ENCODE measurements at regions of chr14 and their contacts with region 1.

Region 1: GRCh38 chr14:100375963-100376735 is 53.0 kb downstream of the SLC25A47 start:
- DNase-seq: peak; percentile 92 to 96
- H3K4me3 ChIP-seq: peak within 1 kb of the TSS; percentile 90
- H3K4me3 Mint-ChIP-seq: peak within 1 kb of the TSS; percentile 83
- H3K27ac Mint-ChIP-seq: peak within 1 kb of the TSS; percentile 77
- H3K4me1 ChIP-seq: no peaks in the 10 kb centered on the region
- H3K4me1 Mint-ChIP-seq: peaks cover 22% of the 10 kb centered on the region
- H3K27me3 ChIP-seq: no peaks in the 10 kb centered on the region
- H3K27me3 Mint-ChIP-seq: no peaks in the 10 kb centered on the region
- CTCF ChIP-seq: no peak

Region 2: DNA sequence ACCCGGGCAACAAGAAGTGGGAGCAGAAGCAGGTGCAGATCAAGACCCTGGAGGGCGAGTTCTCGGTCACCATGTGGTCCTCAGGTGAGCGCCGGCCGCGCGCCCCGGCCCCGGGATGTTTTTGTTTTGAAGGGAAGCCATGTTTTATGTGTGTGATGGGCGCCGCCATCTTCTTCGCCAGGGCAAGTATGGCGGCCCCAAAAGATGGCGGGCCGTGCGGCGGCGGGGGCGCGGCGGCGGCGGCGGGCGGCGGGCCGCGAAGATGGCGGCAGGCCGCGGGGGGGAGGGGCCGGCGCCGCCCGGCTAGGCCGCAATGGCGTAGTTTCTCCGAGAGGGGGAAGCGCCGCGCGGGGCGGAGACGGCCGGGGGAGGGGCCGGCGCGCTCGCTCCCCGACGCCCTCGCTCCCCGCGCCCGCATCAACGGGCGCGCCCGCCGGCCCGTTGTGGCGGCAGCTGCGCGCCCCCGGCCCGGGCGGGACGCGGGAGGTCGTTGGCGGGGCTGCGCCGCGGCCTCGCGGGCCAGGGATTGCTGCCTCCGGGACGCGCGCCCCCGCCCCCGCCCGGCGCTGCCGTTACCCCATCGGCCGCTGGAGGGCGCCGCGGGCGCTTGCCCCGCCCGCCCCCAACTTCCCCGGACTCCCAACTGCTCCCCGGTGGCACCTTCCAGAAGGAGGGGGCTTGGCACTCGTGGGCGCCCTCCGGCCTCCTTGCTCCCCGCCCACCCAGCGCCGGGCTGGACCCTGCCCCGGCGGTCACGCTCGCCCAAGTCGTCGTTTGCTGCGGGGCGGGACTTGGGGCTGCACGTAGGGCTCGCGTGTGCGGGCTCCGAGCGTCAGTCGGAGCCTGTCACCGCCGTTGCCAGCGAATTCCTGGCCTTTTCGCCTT is 136.1 kb before region 1 on chr14:
- CTCF ChIA-PET with region 1: no interaction called
- POLR2A ChIA-PET with region 1: no interaction called
- intact Hi-C with region 1: loop called (anchors 2 kb)
- DNase-seq: peak; percentile 90 to 91
- H3K4me3 ChIP-seq: peak overlapping the region; percentile 100
- H3K4me3 Mint-ChIP-seq: peak overlapping the region; percentile 84
- H3K27ac Mint-ChIP-seq: peak overlapping the region; percentile 91
- H3K4me1 ChIP-seq: peaks cover 7% of the 10 kb centered on the region; the same call in 1 of the 2 replicates
- H3K4me1 Mint-ChIP-seq: peaks cover 9% of the 10 kb centered on the region
- H3K27me3 ChIP-seq: no peaks in the 10 kb centered on the region
- H3K27me3 Mint-ChIP-seq: no peaks in the 10 kb centered on the region
- CTCF ChIP-seq: peak; percentile 55 to 68

Region 3: GRCh38 chr14:100271247-100271939 is 104.8 kb before region 1 on chr14:
- CTCF ChIA-PET with region 1: interaction called, 3 read pairs
- POLR2A ChIA-PET with region 1: no interaction called
- intact Hi-C with region 1: loop called (anchors 1 kb)
- DNase-seq: peak in 1 of 2 experiments; percentile 75
- H3K4me3 ChIP-seq: no peak overlapping the region
- H3K4me3 Mint-ChIP-seq: no peak overlapping the region
- H3K27ac Mint-ChIP-seq: peak overlapping the region; percentile 53
- H3K4me1 ChIP-seq: peaks cover 7% of the 10 kb centered on the region
- H3K4me1 Mint-ChIP-seq: peaks cover 17% of the 10 kb centered on the region
- H3K27me3 ChIP-seq: no peaks in the 10 kb centered on the region
- H3K27me3 Mint-ChIP-seq: no peaks in the 10 kb centered on the region
- CTCF ChIP-seq: peak; percentile 36 to 50

Region 4: DNA sequence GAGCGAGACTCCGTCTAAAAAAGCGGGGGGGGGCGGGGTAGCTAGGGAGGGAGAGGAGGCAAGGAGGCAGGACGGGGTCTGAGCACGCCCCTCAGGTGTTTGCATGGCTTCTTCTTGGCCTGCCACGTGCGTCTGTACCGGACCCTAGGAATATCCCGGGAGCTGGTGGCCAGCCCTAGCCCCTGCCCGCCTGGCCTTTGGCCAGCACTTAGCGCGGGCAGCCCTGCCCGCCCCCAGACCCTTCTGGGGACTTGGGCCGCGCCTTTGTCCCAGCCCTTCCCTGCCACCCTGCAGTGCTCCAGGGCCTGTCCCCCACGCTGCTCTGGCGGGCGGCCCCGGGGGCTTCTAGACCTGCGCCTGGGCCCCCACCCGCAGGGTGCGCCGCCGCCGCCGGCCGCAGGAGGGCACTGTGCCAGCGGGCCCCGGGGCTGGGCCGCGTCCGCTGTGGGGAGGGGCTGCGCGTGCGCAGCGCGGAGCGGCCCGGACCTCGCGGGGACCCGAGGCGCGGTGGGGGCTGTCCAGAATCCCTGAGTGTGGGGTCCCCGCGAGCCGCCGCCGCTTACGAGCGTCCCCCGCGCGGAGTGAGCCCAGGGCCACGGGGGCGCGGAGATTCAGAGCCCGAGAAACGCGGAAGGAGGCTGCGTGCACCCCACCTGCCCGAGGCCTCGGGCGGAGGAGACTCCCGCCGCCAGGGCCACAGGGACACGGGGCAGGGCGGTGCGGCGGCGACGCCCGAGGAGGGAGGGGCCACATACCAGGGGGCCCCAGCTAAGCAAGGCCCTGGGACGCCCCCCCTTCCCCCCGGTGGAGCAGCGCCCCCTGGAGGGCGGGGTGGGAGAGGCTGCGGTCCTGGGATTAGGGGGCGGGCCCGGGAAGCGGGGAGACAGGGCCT is 90.9 kb before region 1 on chr14:
- CTCF ChIA-PET with region 1: interaction called, 6 read pairs
- POLR2A ChIA-PET with region 1: no interaction called
- intact Hi-C with region 1: loop called (anchors 1 kb)
- DNase-seq: peak; percentile 72 to 88
- H3K4me3 ChIP-seq: peak overlapping the region; percentile 84
- H3K4me3 Mint-ChIP-seq: peak overlapping the region; percentile 72
- H3K27ac Mint-ChIP-seq: peak overlapping the region; percentile 68
- H3K4me1 ChIP-seq: 0 out of 2 replicates have a peak, but pooled peaks cover 5% of the 10 kb centered on the region
- H3K4me1 Mint-ChIP-seq: peaks cover 6% of the 10 kb centered on the region
- H3K27me3 ChIP-seq: no peaks in the 10 kb centered on the region
- H3K27me3 Mint-ChIP-seq: no peaks in the 10 kb centered on the region
- CTCF ChIP-seq: peak; percentile 65 to 89

Region 5: DNA sequence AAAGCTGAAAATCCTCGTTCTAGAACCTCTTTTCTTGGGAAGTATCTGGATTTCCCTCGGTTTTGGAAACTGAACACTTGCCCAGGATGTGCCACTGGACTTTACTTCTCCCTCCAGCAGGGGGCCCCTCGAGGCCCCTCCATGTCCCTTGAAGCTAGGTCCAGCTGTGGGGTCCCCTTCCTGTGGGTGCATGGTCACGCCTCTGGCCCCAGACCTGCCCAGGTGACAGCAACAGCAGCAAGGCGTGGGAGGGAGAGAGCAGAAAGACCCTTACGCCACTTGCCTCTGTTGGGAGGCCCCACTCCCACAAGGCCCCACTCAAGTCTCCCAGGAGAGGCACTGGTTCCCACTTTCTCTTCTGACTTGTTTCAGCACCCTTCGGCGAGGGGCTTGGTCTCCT is 73.0 kb before region 1 on chr14:
- CTCF ChIA-PET with region 1: interaction called, 10 read pairs
- POLR2A ChIA-PET with region 1: no interaction called
- intact Hi-C with region 1: loop called (anchors 1 kb)
- DNase-seq: no peak
- H3K4me3 ChIP-seq: no peak overlapping the region
- H3K4me3 Mint-ChIP-seq: no peak overlapping the region
- H3K27ac Mint-ChIP-seq: no peak overlapping the region
- H3K4me1 ChIP-seq: peaks cover 14% of the 10 kb centered on the region; the same call in 1 of the 2 replicates
- H3K4me1 Mint-ChIP-seq: peaks cover 15% of the 10 kb centered on the region
- H3K27me3 ChIP-seq: no peaks in the 10 kb centered on the region
- H3K27me3 Mint-ChIP-seq: no peaks in the 10 kb centered on the region
- CTCF ChIP-seq: peak; percentile 48 to 59

Region 6: DNA sequence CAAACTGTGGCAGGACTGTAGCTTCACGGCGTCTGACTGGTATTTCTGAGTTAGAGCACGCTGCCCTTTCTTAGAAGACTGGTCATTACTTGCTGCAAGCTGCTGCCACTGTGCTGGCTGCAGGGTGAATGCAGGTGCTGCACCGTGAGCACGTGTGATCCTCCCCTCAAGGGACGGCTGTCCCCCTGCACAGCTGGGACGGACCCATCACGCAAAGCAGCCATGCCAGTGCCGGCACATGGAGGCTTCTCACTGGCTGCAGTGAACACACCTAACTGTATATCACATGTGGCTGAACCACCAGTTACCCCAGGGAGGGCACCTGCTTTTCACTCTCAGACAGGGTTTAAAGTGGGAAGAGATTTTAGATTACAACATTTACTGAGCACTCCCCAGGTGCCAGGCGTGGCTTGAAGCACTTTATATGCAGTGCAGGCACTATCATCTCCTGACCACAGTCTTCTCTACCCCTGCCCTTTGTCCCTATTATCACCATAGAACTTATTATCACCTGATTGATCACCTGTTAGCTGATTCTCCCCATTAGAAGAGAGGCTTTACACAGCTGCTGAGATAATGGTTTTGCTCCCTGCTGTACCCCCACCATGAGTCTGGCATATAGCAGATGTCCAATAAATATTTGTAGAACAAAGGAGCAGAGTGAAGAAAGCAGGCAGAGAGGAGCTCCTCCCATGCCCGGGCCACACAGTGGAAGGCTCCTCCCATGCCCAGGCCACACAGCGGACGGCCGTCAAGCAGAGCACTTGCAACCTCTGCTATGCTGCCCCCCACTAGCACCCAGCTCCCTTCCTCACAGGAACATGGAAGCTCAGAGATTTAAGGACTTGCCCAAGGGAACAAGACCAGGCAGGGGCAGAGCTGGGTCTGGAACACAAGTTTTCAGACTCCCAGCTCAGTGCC is 27.1 kb before region 1 on chr14:
- CTCF ChIA-PET with region 1: no interaction called
- POLR2A ChIA-PET with region 1: no interaction called
- intact Hi-C with region 1: no loop called
- DNase-seq: no peak
- H3K4me3 ChIP-seq: no peak overlapping the region
- H3K4me3 Mint-ChIP-seq: no peak overlapping the region
- H3K27ac Mint-ChIP-seq: no peak overlapping the region
- H3K4me1 ChIP-seq: no peaks in the 10 kb centered on the region
- H3K4me1 Mint-ChIP-seq: no peaks in the 10 kb centered on the region
- H3K27me3 ChIP-seq: no peaks in the 10 kb centered on the region
- H3K27me3 Mint-ChIP-seq: no peaks in the 10 kb centered on the region
- CTCF ChIP-seq: no peak

Measured in Caco-2 (cell line).